ENCODE measurements at regions of chr3 and their contacts with region 1.

Region 1: GRCh38 chr3:71984843-71985613 is 200.1 kb upstream of the PROK2 start:
- DNase-seq: peak; percentile 21
- H3K4me3 Mint-ChIP-seq: peak overlapping the region; percentile 62
- H3K27ac Mint-ChIP-seq: peak overlapping the region; percentile 91
- H3K4me1 Mint-ChIP-seq: peaks cover 62% of the 10 kb centered on the region
- H3K27me3 Mint-ChIP-seq: no peaks in the 10 kb centered on the region

Region 2: GRCh38 chr3:72031581-72031980 is 46.6 kb after region 1 on chr3:
- intact Hi-C with region 1: loop called (anchors 5 kb)
- DNase-seq: no peak
- H3K4me3 Mint-ChIP-seq: no peak overlapping the region
- H3K27ac Mint-ChIP-seq: no peak overlapping the region
- H3K4me1 Mint-ChIP-seq: peaks cover 33% of the 10 kb centered on the region
- H3K27me3 Mint-ChIP-seq: peaks cover 5% of the 10 kb centered on the region

Region 3: DNA sequence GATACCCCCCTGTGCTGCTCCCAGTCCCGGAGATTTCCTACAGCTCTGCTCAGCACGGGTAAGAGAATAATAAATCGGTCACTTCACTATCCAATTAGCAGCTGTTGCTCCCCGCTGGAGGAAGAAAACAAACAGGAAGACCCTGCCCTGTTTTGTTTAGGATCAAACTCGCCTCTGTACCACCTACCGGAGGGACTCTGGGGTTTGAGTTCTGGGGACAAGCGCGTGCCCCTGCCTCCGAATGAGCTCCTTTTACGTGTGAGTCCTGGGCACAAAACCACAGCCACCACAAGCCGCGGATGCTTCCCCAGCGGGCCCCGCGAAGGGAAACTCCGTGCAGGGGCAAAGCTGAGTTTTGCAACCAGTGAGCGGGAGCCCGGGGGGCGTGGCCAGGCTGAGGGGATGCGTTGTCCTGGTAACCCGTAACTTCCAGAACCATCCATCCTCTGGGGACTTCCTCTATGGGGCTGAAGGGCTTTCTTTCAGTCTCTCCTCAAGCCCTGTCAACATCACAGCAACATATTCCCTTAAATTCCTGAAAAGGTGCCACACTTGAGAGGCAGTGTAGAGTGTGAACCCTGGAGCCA is 115.7 kb after region 1 on chr3:
- intact Hi-C with region 1: loop called (anchors 1 kb)
- DNase-seq: peak; percentile 95
- H3K4me3 Mint-ChIP-seq: peak overlapping the region; percentile 78
- H3K27ac Mint-ChIP-seq: peak overlapping the region; percentile 88
- H3K4me1 Mint-ChIP-seq: peaks cover 32% of the 10 kb centered on the region
- H3K27me3 Mint-ChIP-seq: peaks cover 5% of the 10 kb centered on the region

Region 4: DNA sequence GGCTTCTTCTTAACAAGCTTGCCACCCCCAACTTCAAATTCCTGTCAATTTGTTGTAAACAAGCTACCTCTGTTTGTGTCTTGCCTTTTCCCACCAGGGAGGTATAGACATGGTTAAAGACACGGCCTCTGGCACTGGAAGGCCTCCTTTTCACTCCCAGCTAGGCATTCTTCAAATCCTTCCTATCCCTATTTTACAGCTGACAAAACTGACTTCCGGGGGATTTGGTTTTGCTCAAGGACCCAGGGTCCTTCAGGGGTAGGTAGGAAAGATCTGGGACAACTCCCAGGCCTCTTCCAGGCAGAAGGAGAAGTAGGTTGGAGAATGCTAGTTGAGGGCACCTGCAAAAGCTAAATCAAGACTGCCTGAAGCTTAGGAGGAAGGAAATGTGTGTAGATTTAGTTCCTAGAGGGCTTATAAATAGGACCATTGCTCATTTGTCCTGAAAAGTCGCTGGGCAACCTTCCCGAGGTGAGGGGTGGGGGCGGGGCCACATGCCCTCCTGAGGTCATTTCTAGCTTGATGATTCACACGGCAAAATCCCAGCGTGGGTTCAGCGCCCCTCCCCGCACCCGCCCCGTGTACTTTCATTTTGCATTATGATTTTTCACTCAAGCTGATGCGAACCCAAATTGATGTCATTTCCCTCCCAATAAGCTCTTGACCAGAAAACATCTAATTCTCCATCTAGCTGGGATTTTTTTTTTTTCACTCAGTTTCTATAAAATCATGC is 497.7 kb after region 1 on chr3:
- intact Hi-C with region 1: loop called (anchors 1 kb)
- DNase-seq: peak; percentile 47
- H3K4me3 Mint-ChIP-seq: peak overlapping the region; percentile 68
- H3K27ac Mint-ChIP-seq: peak overlapping the region; percentile 94
- H3K4me1 Mint-ChIP-seq: peaks cover 73% of the 10 kb centered on the region
- H3K27me3 Mint-ChIP-seq: no peaks in the 10 kb centered on the region

Region 5: GRCh38 chr3:72847751-72848702 is 863.0 kb after region 1 on chr3 and contains the start of gene SHQ1:
- intact Hi-C with region 1: loop called (anchors 2 kb)
- DNase-seq: peak; percentile 92
- H3K4me3 Mint-ChIP-seq: peak within 1 kb of the TSS; percentile 99
- H3K27ac Mint-ChIP-seq: peak within 1 kb of the TSS; percentile 88
- H3K4me1 Mint-ChIP-seq: peaks cover 62% of the 10 kb centered on the region
- H3K27me3 Mint-ChIP-seq: peaks cover 9% of the 10 kb centered on the region
- total RNA-seq, gene SHQ1: 46.1 and 48.5 TPM in 2 replicates